SK-N-SH (cell line): ENCODE measurements at regions of chr12 and their contacts with region 1.

Region 1: DNA sequence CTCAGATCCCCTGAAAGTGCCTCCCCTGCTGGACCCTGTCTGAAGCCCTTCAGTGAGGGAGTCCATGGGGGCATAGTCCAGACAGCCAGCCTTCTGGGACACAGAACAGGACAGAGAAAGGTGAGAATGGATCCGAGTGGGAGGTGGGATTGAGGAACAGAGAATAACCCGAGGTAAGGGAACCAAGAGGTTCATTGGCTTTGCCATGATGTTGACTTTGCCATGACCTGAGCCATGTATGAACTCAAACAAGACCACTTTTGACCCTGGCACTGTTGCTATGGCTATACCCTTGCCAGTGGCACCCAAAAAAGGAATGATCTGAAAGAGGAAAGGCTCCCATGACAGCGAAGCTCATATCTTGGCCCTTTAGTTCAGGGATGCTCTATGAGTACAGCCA is 22.6 kb upstream of the VDR start:
- DNase-seq: no peak
- H3K4me3 ChIP-seq: no peak overlapping the region
- H3K27ac ChIP-seq: no peak overlapping the region
- H3K4me1 ChIP-seq: no peaks in the 10 kb centered on the region
- H3K27me3 ChIP-seq: peaks cover 6% of the 10 kb centered on the region; the same call in 1 of the 2 replicates
- CTCF ChIP-seq: no peak
- EP300 ChIP-seq: no peak
- RAD21 ChIP-seq: no peak

Region 2: DNA sequence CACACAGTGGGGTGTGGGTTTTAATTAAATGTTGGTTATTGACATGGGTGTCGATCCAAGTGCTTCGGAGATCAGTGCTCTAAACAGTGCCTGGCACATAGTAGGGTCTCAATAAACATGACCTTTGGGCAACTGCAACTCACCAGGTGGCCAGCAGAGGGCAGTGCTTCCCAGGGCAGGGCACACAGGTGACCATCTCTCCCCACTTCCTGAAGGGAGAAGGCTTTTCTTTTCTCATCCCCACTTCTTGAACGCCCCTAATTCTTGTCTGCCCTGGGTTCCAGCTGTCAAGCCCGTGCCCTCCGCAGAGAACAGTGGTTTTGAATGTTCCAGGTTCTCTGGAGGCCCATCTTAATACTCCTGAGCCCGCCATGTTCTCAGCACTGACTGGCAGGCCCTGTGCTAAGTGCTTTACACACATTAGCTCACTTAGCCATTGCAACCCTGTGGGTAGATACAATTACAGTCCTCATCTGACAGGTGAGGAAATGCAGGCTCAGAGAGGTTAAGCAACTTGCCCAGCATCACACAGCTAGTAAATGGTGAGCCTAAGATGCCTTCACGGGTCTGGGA is 185.0 kb before region 1 on chr12:
- CTCF ChIA-PET with region 1: no interaction called
- POLR2A ChIA-PET with region 1: no interaction called
- DNase-seq: peak; percentile 72
- H3K4me3 ChIP-seq: no peak overlapping the region
- H3K27ac ChIP-seq: no peak overlapping the region
- H3K4me1 ChIP-seq: peaks cover 14 to 39% of the 10 kb centered on the region in 2 experiments; a peak in 3 of 4 replicates
- H3K27me3 ChIP-seq: no peaks in the 10 kb centered on the region
- CTCF ChIP-seq: peak; percentile 98
- EP300 ChIP-seq: no peak
- RAD21 ChIP-seq: peak; percentile 82

Region 3: DNA sequence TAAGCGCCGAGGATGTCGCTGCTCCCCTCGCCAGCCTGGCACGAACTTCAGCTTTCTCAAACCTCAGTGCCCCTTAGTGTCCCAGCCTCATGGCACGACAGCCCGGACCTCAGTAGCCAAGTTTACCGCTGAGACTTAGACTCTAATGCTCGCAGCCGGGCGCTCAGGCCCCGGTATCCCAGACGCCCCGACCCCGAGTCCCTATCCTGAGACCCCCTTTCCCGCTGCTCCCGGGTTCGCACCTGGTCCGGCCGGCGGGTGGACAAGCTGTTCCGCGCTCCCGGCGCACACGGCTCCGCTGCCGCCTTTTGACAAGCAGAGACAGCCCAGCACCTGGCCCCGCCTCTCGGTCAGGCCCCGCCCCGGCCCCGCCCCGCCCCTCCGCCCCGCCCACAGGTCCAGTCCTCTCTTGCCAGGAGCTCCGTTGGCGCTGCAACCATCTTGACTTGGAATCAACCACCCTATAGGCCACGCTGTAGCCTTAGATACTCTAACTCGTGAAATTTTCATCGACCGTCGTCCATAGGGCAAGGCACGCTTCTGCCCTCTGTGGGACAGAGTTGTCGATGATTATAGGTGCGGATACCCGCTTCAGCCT is 22.5 kb before region 1 on chr12 and contains the start of gene VDR:
- CTCF ChIA-PET with region 1: interaction called, 14 read pairs
- POLR2A ChIA-PET with region 1: no interaction called
- DNase-seq: peak; percentile 93
- H3K4me3 ChIP-seq: peak within 1 kb of the TSS; percentile 51 to 73
- H3K27ac ChIP-seq: no peak within 1 kb of the TSS; a peak in 1 of 4 replicates
- H3K4me1 ChIP-seq: peaks cover 7 to 18% of the 10 kb centered on the region in 2 experiments; a peak in 2 of 4 replicates
- H3K27me3 ChIP-seq: peaks cover 11% of the 10 kb centered on the region
- CTCF ChIP-seq: no peak; the same call in 1 of the 2 replicates
- EP300 ChIP-seq: no peak
- RAD21 ChIP-seq: peak; percentile 21; the same call in 1 of the 2 replicates
- polyA plus RNA-seq, gene VDR: 0.29 and 0.33 TPM in 2 replicates

Region 4: GRCh38 chr12:47977046-47977766 is 49.9 kb after region 1 on chr12:
- CTCF ChIA-PET with region 1: no interaction called
- POLR2A ChIA-PET with region 1: no interaction called
- DNase-seq: no peak
- H3K4me3 ChIP-seq: no peak overlapping the region
- H3K27ac ChIP-seq: no peak overlapping the region
- H3K4me1 ChIP-seq: peaks cover 0 to 10% of the 10 kb centered on the region in 2 experiments; a peak in 1 of 4 replicates
- H3K27me3 ChIP-seq: no peaks in the 10 kb centered on the region
- CTCF ChIP-seq: no peak
- EP300 ChIP-seq: no peak
- RAD21 ChIP-seq: no peak

Region 5: GRCh38 chr12:47988073-47989022 is 61.0 kb after region 1 on chr12:
- CTCF ChIA-PET with region 1: no interaction called
- POLR2A ChIA-PET with region 1: no interaction called
- DNase-seq: no peak
- H3K4me3 ChIP-seq: no peak overlapping the region
- H3K27ac ChIP-seq: no peak overlapping the region
- H3K4me1 ChIP-seq: peaks cover 0 to 43% of the 10 kb centered on the region in 2 experiments; a peak in 2 of 4 replicates
- H3K27me3 ChIP-seq: no peaks in the 10 kb centered on the region; the same call in 1 of the 2 replicates
- CTCF ChIP-seq: no peak
- EP300 ChIP-seq: no peak
- RAD21 ChIP-seq: no peak